Calu3 (cell line): ENCODE measurements at regions of chr6 and their contacts with region 1.

Region 1: DNA sequence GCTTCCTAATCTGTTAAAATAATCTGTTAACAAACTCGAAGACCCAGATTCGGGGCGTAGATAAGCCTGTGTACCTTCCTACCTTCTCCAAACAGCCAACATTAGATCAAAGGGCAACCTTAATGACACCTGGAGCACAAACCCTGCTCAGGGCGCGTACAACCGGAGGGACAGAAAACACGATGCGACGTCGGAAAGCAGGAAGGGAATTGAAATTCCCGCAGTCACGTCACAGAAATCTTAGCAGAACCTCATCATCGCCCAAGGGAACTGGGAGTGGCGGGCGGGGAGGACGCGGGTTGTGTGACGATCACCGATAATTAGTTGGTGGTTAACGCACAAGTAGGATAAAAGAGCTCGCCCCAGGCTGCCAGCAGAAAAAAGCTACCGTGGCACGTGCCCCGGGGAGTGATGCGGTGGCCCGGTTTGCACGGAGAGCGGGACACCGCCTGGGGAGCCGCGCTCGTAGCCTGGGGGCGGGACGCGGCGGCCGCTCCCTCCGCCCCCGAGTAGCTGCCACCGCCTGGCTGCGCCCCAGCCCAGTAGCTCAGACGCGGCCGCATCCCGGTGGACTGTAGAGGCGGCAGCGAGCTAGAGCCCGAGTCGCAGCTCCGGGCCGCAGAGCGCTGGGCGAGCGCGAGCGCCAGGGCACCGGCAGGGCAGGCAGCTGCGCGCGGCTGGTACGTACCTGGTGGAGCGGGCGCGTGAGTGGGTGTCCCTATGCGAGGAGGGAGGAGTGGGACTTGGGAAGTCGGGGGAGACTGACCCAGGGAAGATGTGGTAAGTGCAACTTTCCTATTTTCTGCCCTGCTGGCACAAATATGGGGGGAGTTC is at the start of gene PKIB:
- DNase-seq: peak; percentile 87
- H3K4me3 Mint-ChIP-seq: peak within 1 kb of the TSS; percentile 88
- H3K27ac Mint-ChIP-seq: peak within 1 kb of the TSS; percentile 39
- H3K4me1 Mint-ChIP-seq: no peaks in the 10 kb centered on the region
- H3K27me3 Mint-ChIP-seq: no peaks in the 10 kb centered on the region
- CTCF ChIP-seq: peak; percentile 21
- total RNA-seq, gene PKIB: 11.8 and 17.2 TPM in 2 replicates

Region 2: GRCh38 chr6:121851056-121851455 is 759.0 kb before region 1 on chr6:
- CTCF ChIA-PET with region 1: no interaction called
- intact Hi-C with region 1: no loop called
- DNase-seq: no peak
- H3K4me3 Mint-ChIP-seq: no peak overlapping the region
- H3K27ac Mint-ChIP-seq: no peak overlapping the region
- H3K4me1 Mint-ChIP-seq: no peaks in the 10 kb centered on the region
- H3K27me3 Mint-ChIP-seq: no peaks in the 10 kb centered on the region
- CTCF ChIP-seq: no peak

Region 3: DNA sequence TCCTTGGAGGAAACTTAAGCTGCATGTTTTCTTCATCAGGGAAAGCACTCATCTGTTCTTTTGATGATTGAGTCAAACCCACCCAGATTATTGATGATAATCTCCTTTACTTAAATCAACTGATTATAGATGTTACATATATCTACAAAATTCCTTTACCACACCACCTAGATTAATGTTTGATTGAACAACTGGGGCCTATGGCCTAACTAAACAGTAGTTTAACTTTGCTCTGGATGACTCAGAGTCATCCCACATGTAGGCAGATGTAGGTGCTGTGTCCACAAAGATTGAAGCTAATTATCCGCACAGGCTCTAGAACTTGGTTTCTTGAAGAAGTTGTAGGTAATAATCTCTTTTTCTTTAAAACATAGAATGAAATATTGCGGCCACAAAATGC is 42.4 kb after region 1 on chr6:
- CTCF ChIA-PET with region 1: no interaction called
- intact Hi-C with region 1: loop called (anchors 1 kb)
- DNase-seq: peak; percentile 13
- H3K4me3 Mint-ChIP-seq: peak overlapping the region; percentile 44
- H3K27ac Mint-ChIP-seq: peak overlapping the region; percentile 88
- H3K4me1 Mint-ChIP-seq: peaks cover 41% of the 10 kb centered on the region
- H3K27me3 Mint-ChIP-seq: no peaks in the 10 kb centered on the region
- CTCF ChIP-seq: no peak